Activated CD8-positive, alpha-beta T cell treated with anti-CD3 and anti-CD28 coated beads for 36 hours (primary cell): ENCODE measurements at regions of chr1 and their contacts with region 1.

Region 1: GRCh38 chr1:86704458-86704971 is at the start of gene SH3GLB1:
- DNase-seq: peak; percentile 91
- ATAC-seq: peak; percentile 89
- H3K4me3 Mint-ChIP-seq: peak within 1 kb of the TSS; percentile 94
- H3K27ac Mint-ChIP-seq: peak within 1 kb of the TSS; percentile 98
- H3K4me1 Mint-ChIP-seq: peaks cover 37% of the 10 kb centered on the region
- H3K27me3 Mint-ChIP-seq: no peaks in the 10 kb centered on the region
- CTCF ChIP-seq: peak; percentile 90
- total RNA-seq, gene SH3GLB1: 46.1 to 47.3 TPM

Region 2: GRCh38 chr1:86169625-86170024 is 534.9 kb before region 1 on chr1:
- CTCF ChIA-PET with region 1: no interaction called
- POLR2A ChIA-PET with region 1: no interaction called
- intact Hi-C with region 1: no loop called
- DNase-seq: no peak
- ATAC-seq: no peak
- H3K4me3 Mint-ChIP-seq: no peak overlapping the region
- H3K27ac Mint-ChIP-seq: no peak overlapping the region
- H3K4me1 Mint-ChIP-seq: no peaks in the 10 kb centered on the region
- H3K27me3 Mint-ChIP-seq: no peaks in the 10 kb centered on the region
- CTCF ChIP-seq: no peak

Region 3: GRCh38 chr1:86380257-86380861 is 324.2 kb before region 1 on chr1:
- CTCF ChIA-PET with region 1: interaction called, 14 read pairs
- POLR2A ChIA-PET with region 1: interaction called, 5 read pairs
- intact Hi-C with region 1: no loop called
- DNase-seq: peak; percentile 10
- ATAC-seq: peak; percentile 68
- H3K4me3 Mint-ChIP-seq: no peak overlapping the region
- H3K27ac Mint-ChIP-seq: no peak overlapping the region
- H3K4me1 Mint-ChIP-seq: peaks cover 8% of the 10 kb centered on the region
- H3K27me3 Mint-ChIP-seq: no peaks in the 10 kb centered on the region
- CTCF ChIP-seq: peak; percentile 81

Region 4: DNA sequence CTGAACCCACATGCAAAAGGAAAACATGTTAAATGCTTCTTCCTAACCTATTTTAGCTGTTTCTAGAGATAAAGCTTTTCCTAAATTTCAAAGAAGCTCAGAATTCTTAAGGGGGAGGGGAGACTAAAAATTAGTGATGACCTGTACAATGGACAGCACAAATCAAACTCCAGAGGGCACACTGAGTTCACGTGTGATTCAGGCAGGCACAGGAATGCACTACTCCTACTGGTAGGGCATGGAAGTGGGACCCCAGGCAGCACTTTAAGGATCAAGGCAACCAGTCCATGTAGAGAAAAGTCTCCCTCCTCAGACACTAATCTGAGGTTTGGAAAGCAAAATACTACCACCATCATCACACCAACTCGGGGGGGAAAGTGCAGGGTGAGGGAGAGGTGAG is 188.9 kb before region 1 on chr1:
- CTCF ChIA-PET with region 1: no interaction called
- POLR2A ChIA-PET with region 1: no interaction called
- intact Hi-C with region 1: no loop called
- DNase-seq: no peak
- ATAC-seq: no peak
- H3K4me3 Mint-ChIP-seq: no peak overlapping the region
- H3K27ac Mint-ChIP-seq: no peak overlapping the region
- H3K4me1 Mint-ChIP-seq: no peaks in the 10 kb centered on the region
- H3K27me3 Mint-ChIP-seq: no peaks in the 10 kb centered on the region
- CTCF ChIP-seq: no peak

Region 5: GRCh38 chr1:86582161-86582560 is 122.4 kb before region 1 on chr1:
- CTCF ChIA-PET with region 1: no interaction called
- POLR2A ChIA-PET with region 1: no interaction called
- intact Hi-C with region 1: no loop called
- DNase-seq: no peak
- ATAC-seq: no peak
- H3K4me3 Mint-ChIP-seq: no peak overlapping the region
- H3K27ac Mint-ChIP-seq: no peak overlapping the region
- H3K4me1 Mint-ChIP-seq: no peaks in the 10 kb centered on the region
- H3K27me3 Mint-ChIP-seq: no peaks in the 10 kb centered on the region
- CTCF ChIP-seq: no peak

Region 6: DNA sequence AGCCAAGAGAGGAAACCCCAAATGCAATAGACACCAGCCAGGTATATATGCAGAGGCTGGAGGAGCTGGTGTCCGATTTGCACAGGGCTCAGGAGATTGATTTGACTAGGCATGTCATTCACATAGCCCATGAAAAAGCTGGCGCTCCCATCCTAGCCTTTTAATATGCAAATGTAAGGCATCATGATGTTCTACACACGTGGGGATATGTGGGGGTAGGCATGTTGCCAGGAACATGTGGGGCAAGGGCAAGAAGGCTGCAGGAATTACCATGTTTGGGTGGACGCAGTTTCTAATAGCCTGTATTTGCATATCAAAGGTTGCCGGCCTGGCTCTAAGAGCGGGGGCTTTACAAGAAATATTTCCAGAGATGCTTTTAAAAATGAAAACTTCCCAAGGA is 11.9 kb before region 1 on chr1:
- CTCF ChIA-PET with region 1: interaction called, 12 read pairs
- POLR2A ChIA-PET with region 1: interaction called, 6 read pairs
- intact Hi-C with region 1: no loop called
- DNase-seq: no peak
- ATAC-seq: no peak
- H3K4me3 Mint-ChIP-seq: no peak overlapping the region
- H3K27ac Mint-ChIP-seq: no peak overlapping the region
- H3K4me1 Mint-ChIP-seq: no peaks in the 10 kb centered on the region
- H3K27me3 Mint-ChIP-seq: no peaks in the 10 kb centered on the region
- CTCF ChIP-seq: no peak

Region 7: GRCh38 chr1:86741947-86742572 is 37.5 kb after region 1 on chr1:
- CTCF ChIA-PET with region 1: interaction called, 41 read pairs
- POLR2A ChIA-PET with region 1: interaction called, 5 read pairs
- intact Hi-C with region 1: no loop called
- DNase-seq: peak; percentile 58
- ATAC-seq: no peak
- H3K4me3 Mint-ChIP-seq: no peak overlapping the region
- H3K27ac Mint-ChIP-seq: no peak overlapping the region
- H3K4me1 Mint-ChIP-seq: no peaks in the 10 kb centered on the region
- H3K27me3 Mint-ChIP-seq: no peaks in the 10 kb centered on the region
- CTCF ChIP-seq: peak; percentile 70

Region 8: GRCh38 chr1:86913896-86914634 is 209.6 kb after region 1 on chr1 and contains the start of gene SELENOF:
- CTCF ChIA-PET with region 1: interaction called, 5 read pairs
- POLR2A ChIA-PET with region 1: interaction called, 27 read pairs
- intact Hi-C with region 1: loop called (anchors 10 kb)
- DNase-seq: peak; percentile 100
- ATAC-seq: peak; percentile 92
- H3K4me3 Mint-ChIP-seq: no peak within 1 kb of the TSS
- H3K27ac Mint-ChIP-seq: no peak within 1 kb of the TSS
- H3K4me1 Mint-ChIP-seq: peaks cover 42% of the 10 kb centered on the region
- H3K27me3 Mint-ChIP-seq: no peaks in the 10 kb centered on the region
- CTCF ChIP-seq: no peak
- total RNA-seq, gene SELENOF: 115 to 131 TPM